Activated B cell treated with CpG ODN at 0.5 μM for 24 hours (primary cell): ENCODE measurements at regions of chr12 and their contacts with region 1.

Region 1: GRCh38 chr12:14239350-14239934 is 126.0 kb upstream of the ATF7IP start:
- DNase-seq: peak; percentile 48
- ATAC-seq: peak; percentile 82
- H3K4me3 Mint-ChIP-seq: peak overlapping the region; percentile 82
- H3K27ac Mint-ChIP-seq: peak overlapping the region; percentile 99
- H3K4me1 Mint-ChIP-seq: peaks cover 42% of the 10 kb centered on the region
- H3K27me3 Mint-ChIP-seq: no peaks in the 10 kb centered on the region
- CTCF ChIP-seq: no peak

Region 2: GRCh38 chr12:14216405-14217294 is 22.8 kb before region 1 on chr12:
- CTCF ChIA-PET with region 1: interaction called, 14 read pairs
- POLR2A ChIA-PET with region 1: interaction called, 20 read pairs
- intact Hi-C with region 1: loop called (anchors 1 kb)
- DNase-seq: no peak
- ATAC-seq: peak; percentile 62
- H3K4me3 Mint-ChIP-seq: peak overlapping the region; percentile 70
- H3K27ac Mint-ChIP-seq: peak overlapping the region; percentile 82
- H3K4me1 Mint-ChIP-seq: peaks cover 34% of the 10 kb centered on the region
- H3K27me3 Mint-ChIP-seq: no peaks in the 10 kb centered on the region
- CTCF ChIP-seq: no peak

Region 3: DNA sequence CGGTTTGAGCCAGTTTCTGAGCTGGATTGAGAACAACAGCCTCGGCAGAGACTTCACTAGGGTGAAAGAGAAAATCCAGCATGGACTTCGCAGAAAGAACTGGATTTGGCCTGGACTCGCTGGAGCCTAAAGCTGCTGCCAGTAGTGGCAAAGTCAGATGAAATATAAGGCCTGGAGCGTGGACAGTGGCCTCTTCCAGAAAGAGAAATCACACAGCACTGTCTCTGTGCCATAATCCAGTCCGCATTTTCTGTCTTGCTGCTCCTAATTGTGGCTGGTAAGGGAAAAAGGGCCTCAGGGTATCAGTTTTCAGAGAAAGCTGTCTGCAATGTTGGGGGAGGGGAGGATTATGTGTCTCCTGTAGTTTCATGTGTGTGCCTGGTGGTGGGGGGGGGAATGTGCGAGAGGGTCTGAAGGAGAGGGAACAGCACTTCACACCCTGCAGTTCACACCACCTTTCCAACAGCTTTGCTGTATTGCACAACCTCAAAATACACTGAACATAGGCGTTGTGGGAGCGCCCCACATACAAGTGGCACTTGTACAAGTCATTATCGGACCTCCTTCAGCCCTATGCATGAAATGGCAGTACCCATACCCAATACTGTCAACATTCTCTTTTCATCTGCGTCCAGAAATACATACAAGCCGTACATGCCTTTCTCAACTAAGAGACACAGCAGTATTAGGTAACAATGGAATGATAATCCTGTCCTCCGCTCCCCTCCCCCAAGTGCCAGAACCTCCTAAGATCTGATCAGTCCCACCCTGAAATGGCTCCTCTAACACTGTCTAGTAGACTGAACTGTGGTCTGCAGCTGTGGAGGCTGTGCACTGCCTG is 18.5 kb after region 1 on chr12:
- CTCF ChIA-PET with region 1: interaction called, 17 read pairs
- POLR2A ChIA-PET with region 1: interaction called, 19 read pairs
- intact Hi-C with region 1: loop called (anchors 1 kb)
- DNase-seq: no peak
- ATAC-seq: peak; percentile 68
- H3K4me3 Mint-ChIP-seq: peak overlapping the region; percentile 75
- H3K27ac Mint-ChIP-seq: peak overlapping the region; percentile 98
- H3K4me1 Mint-ChIP-seq: peaks cover 70% of the 10 kb centered on the region
- H3K27me3 Mint-ChIP-seq: no peaks in the 10 kb centered on the region
- CTCF ChIP-seq: no peak

Region 4: GRCh38 chr12:14454098-14454907 is 214.9 kb after region 1 on chr12:
- CTCF ChIA-PET with region 1: interaction called, 84 read pairs
- POLR2A ChIA-PET with region 1: interaction called, 21 read pairs
- intact Hi-C with region 1: loop called (anchors 1 kb)
- DNase-seq: no peak
- ATAC-seq: peak; percentile 97
- H3K4me3 Mint-ChIP-seq: no peak overlapping the region
- H3K27ac Mint-ChIP-seq: peak overlapping the region; percentile 74
- H3K4me1 Mint-ChIP-seq: peaks cover 41% of the 10 kb centered on the region
- H3K27me3 Mint-ChIP-seq: no peaks in the 10 kb centered on the region
- CTCF ChIP-seq: no peak

Region 5: DNA sequence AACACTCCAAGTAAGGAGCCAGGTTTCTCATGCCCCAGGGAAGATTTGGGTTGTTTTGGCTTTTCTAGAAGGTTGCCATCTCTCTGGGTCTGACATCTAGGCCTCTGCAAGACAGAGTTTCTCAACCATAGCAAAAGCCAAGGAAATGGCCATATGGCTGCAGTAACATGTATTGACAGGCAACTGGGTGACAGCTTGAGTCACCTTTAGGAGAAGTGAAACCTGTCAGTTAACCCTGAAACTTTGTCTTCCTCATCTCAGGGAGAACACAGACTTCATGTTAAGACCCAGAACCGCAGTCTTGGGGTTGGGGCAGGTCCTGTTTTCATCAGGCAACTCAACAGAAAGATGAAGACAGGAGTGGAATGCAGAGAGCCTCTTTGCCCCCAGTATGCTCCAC is 374.3 kb after region 1 on chr12:
- CTCF ChIA-PET with region 1: interaction called, 9 read pairs
- POLR2A ChIA-PET with region 1: interaction called, 5 read pairs
- intact Hi-C with region 1: loop called (anchors 1 kb)
- DNase-seq: peak; percentile 34
- ATAC-seq: peak; percentile 86
- H3K4me3 Mint-ChIP-seq: peak overlapping the region; percentile 60
- H3K27ac Mint-ChIP-seq: peak overlapping the region; percentile 93
- H3K4me1 Mint-ChIP-seq: peaks cover 38% of the 10 kb centered on the region
- H3K27me3 Mint-ChIP-seq: no peaks in the 10 kb centered on the region
- CTCF ChIP-seq: no peak

Region 6: DNA sequence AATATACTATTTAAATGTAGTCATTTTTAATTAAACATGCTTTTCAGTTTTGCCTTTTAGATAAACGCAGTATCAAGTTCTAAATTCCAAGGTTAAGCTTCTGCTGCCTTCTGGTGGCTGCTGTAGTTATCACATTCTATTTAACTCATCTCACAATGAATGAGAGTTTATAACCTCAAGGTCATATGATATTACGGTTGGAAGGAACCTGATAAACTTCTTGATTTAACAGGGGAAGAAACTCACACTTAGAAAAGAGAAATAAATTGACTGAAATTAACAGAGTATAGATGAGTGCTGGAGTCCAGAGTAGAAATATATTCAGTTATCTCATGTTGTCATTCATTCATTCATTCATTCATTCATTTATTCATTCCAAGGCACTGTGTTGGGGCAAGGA is 425.1 kb after region 1 on chr12:
- CTCF ChIA-PET with region 1: interaction called, 36 read pairs
- POLR2A ChIA-PET with region 1: interaction called, 3 read pairs
- intact Hi-C with region 1: loop called (anchors 1 kb)
- DNase-seq: no peak
- ATAC-seq: peak; percentile 85
- H3K4me3 Mint-ChIP-seq: no peak overlapping the region
- H3K27ac Mint-ChIP-seq: no peak overlapping the region
- H3K4me1 Mint-ChIP-seq: peaks cover 14% of the 10 kb centered on the region
- H3K27me3 Mint-ChIP-seq: no peaks in the 10 kb centered on the region
- CTCF ChIP-seq: no peak

Region 7: DNA sequence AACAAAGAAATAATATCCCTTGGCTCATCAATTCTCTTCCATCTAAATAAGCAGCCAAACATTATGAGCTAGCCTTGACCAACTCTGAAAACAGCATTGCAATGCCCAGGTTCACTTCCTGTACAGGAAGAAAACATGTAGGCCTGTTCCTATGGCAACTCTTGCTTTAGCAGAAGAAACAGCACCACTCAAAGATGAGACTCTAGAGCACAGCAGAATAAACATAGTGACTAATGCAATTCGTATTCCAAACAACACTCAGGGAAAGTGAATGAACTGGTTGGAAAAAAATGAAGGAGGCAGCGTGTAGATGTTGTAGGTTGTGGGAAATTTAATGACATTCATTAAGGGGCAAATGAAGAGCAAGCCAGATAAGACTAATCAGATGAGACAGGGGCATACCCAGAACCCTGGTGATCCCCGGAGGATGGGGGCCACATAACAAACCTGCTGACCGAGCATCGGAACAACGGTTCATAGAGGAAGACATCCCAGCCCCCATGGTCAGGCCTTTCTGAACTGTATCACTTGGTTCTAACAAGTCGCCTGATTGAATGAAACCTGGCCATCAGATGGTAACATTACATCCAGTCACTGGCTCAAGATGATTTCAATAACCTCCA is 713.0 kb after region 1 on chr12:
- CTCF ChIA-PET with region 1: no interaction called
- POLR2A ChIA-PET with region 1: no interaction called
- intact Hi-C with region 1: no loop called
- DNase-seq: no peak
- ATAC-seq: peak; percentile 43
- H3K4me3 Mint-ChIP-seq: peak overlapping the region; percentile 77
- H3K27ac Mint-ChIP-seq: peak overlapping the region; percentile 96
- H3K4me1 Mint-ChIP-seq: peaks cover 98% of the 10 kb centered on the region
- H3K27me3 Mint-ChIP-seq: no peaks in the 10 kb centered on the region
- CTCF ChIP-seq: no peak

Region 8: GRCh38 chr12:15268927-15269552 is 1029.6 kb after region 1 on chr12:
- CTCF ChIA-PET with region 1: no interaction called
- POLR2A ChIA-PET with region 1: no interaction called
- intact Hi-C with region 1: loop called (anchors 2 kb)
- DNase-seq: no peak
- ATAC-seq: peak; percentile 62
- H3K4me3 Mint-ChIP-seq: no peak overlapping the region
- H3K27ac Mint-ChIP-seq: no peak overlapping the region
- H3K4me1 Mint-ChIP-seq: no peaks in the 10 kb centered on the region
- H3K27me3 Mint-ChIP-seq: peaks cover 5% of the 10 kb centered on the region
- CTCF ChIP-seq: peak; percentile 76